MCF 10A (cell line): ENCODE measurements at regions of chr5 and their contacts with region 1.

Region 1: GRCh38 chr5:172932313-172933017 is 26.8 kb upstream of the RPL26L1 start:
- DNase-seq: peak; percentile 82
- H3K4me3 Mint-ChIP-seq: peak overlapping the region; percentile 28
- H3K27ac Mint-ChIP-seq: peak overlapping the region; percentile 90
- H3K4me1 Mint-ChIP-seq: peaks cover 28% of the 10 kb centered on the region
- H3K27me3 Mint-ChIP-seq: no peaks in the 10 kb centered on the region
- CTCF ChIP-seq: peak; percentile 100

Region 2: GRCh38 chr5:172721301-172722130 is 210.9 kb before region 1 on chr5:
- CTCF ChIA-PET with region 1: interaction called, 121 read pairs
- POLR2A ChIA-PET with region 1: interaction called, 4 read pairs
- intact Hi-C with region 1: loop called (anchors 1 kb)
- DNase-seq: no peak
- H3K4me3 Mint-ChIP-seq: no peak overlapping the region
- H3K27ac Mint-ChIP-seq: no peak overlapping the region
- H3K4me1 Mint-ChIP-seq: peaks cover 16% of the 10 kb centered on the region
- H3K27me3 Mint-ChIP-seq: no peaks in the 10 kb centered on the region
- CTCF ChIP-seq: no peak

Region 3: GRCh38 chr5:172758083-172758833 is 174.2 kb before region 1 on chr5:
- CTCF ChIA-PET with region 1: interaction called, 14 read pairs
- POLR2A ChIA-PET with region 1: interaction called, 4 read pairs
- intact Hi-C with region 1: no loop called
- DNase-seq: peak; percentile 98
- H3K4me3 Mint-ChIP-seq: no peak overlapping the region
- H3K27ac Mint-ChIP-seq: peak overlapping the region; percentile 76
- H3K4me1 Mint-ChIP-seq: peaks cover 12% of the 10 kb centered on the region
- H3K27me3 Mint-ChIP-seq: no peaks in the 10 kb centered on the region
- CTCF ChIP-seq: no peak

Region 4: GRCh38 chr5:172777881-172778814 is 154.3 kb before region 1 on chr5:
- CTCF ChIA-PET with region 1: interaction called, 83 read pairs
- POLR2A ChIA-PET with region 1: interaction called, 120 read pairs
- intact Hi-C with region 1: no loop called
- DNase-seq: peak; percentile 97
- H3K4me3 Mint-ChIP-seq: peak overlapping the region; percentile 69
- H3K27ac Mint-ChIP-seq: peak overlapping the region; percentile 99
- H3K4me1 Mint-ChIP-seq: peaks cover 70% of the 10 kb centered on the region
- H3K27me3 Mint-ChIP-seq: no peaks in the 10 kb centered on the region
- CTCF ChIP-seq: no peak

Region 5: DNA sequence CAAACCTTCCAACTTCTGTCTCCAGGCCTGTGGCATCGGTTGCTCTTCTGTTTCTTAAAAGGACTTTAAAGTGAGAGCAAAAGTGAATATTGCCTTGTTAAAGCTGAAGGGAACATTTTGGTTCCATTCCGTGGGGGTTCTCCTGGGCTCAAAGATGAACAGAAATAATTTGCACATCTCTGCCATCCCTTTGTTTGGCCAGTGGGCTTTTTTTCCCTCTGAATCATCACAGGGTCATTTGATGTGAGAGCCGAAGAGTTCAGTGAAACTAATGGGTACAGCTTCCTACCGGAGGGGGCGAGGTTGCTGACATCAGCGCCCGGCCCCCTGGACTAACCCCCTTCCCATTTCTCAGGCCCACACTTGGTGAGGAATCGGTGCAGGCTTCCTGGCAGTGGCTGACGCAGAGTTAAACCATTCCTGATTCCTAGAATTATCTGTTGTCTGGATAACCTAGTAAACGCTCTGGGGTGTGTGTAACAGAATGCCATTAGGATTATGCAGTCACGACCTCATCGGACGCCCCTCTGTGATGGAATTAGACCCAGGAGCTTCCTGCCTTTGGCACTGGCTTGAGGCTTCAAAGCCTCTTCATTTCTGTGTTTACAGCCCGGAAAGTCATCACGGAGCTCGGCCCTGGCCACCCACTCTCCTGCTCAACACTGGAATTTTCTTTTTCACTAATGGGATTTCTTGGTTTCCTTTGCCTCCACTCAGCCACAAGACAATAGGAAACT is 34.8 kb before region 1 on chr5:
- CTCF ChIA-PET with region 1: interaction called, 12 read pairs
- POLR2A ChIA-PET with region 1: interaction called, 7 read pairs
- intact Hi-C with region 1: no loop called
- DNase-seq: peak; percentile 63
- H3K4me3 Mint-ChIP-seq: no peak overlapping the region
- H3K27ac Mint-ChIP-seq: peak overlapping the region; percentile 98
- H3K4me1 Mint-ChIP-seq: peaks cover 70% of the 10 kb centered on the region
- H3K27me3 Mint-ChIP-seq: no peaks in the 10 kb centered on the region
- CTCF ChIP-seq: no peak

Region 6: GRCh38 chr5:172920447-172920849 is 12.0 kb before region 1 on chr5:
- CTCF ChIA-PET with region 1: interaction called, 13 read pairs
- POLR2A ChIA-PET with region 1: interaction called, 4 read pairs
- intact Hi-C with region 1: no loop called
- DNase-seq: peak; percentile 95
- H3K4me3 Mint-ChIP-seq: no peak overlapping the region
- H3K27ac Mint-ChIP-seq: peak overlapping the region; percentile 89
- H3K4me1 Mint-ChIP-seq: peaks cover 26% of the 10 kb centered on the region
- H3K27me3 Mint-ChIP-seq: no peaks in the 10 kb centered on the region
- CTCF ChIP-seq: no peak

Region 7: GRCh38 chr5:173051746-173052145 is 119.3 kb after region 1 on chr5:
- CTCF ChIA-PET with region 1: no interaction called
- POLR2A ChIA-PET with region 1: no interaction called
- intact Hi-C with region 1: no loop called
- DNase-seq: no peak
- H3K4me3 Mint-ChIP-seq: no peak overlapping the region
- H3K27ac Mint-ChIP-seq: no peak overlapping the region
- H3K4me1 Mint-ChIP-seq: peaks cover 18% of the 10 kb centered on the region
- H3K27me3 Mint-ChIP-seq: no peaks in the 10 kb centered on the region
- CTCF ChIP-seq: no peak

Region 8: GRCh38 chr5:173458821-173459609 is 526.5 kb after region 1 on chr5:
- CTCF ChIA-PET with region 1: no interaction called
- POLR2A ChIA-PET with region 1: no interaction called
- intact Hi-C with region 1: no loop called
- DNase-seq: peak; percentile 76
- H3K4me3 Mint-ChIP-seq: no peak overlapping the region
- H3K27ac Mint-ChIP-seq: peak overlapping the region; percentile 59
- H3K4me1 Mint-ChIP-seq: peaks cover 42% of the 10 kb centered on the region
- H3K27me3 Mint-ChIP-seq: no peaks in the 10 kb centered on the region
- CTCF ChIP-seq: no peak